CD4-positive, alpha-beta T cell (primary cell): ENCODE measurements at regions of chr15 and their contacts with region 1.

Region 1: GRCh38 chr15:51737280-51738017 is at the start of gene LYSMD2:
- DNase-seq: peak; percentile 28 to 84 (median 68)
- ATAC-seq: peak; percentile 56
- H3K4me3 ChIP-seq: peak within 1 kb of the TSS; percentile 78
- H3K4me3 Mint-ChIP-seq: peak within 1 kb of the TSS; percentile 92
- H3K27ac ChIP-seq: peak within 1 kb of the TSS; percentile 81 to 83
- H3K27ac Mint-ChIP-seq: peak within 1 kb of the TSS; percentile 97
- H3K4me1 ChIP-seq: peaks cover 57% of the 10 kb centered on the region
- H3K4me1 Mint-ChIP-seq: peaks cover 61% of the 10 kb centered on the region
- H3K27me3 ChIP-seq: no peaks in the 10 kb centered on the region
- H3K27me3 Mint-ChIP-seq: no peaks in the 10 kb centered on the region
- CTCF ChIP-seq: no peak
- total RNA-seq, gene LYSMD2: 17.4 TPM

Region 2: GRCh38 chr15:51348688-51349087 is 388.8 kb before region 1 on chr15:
- CTCF ChIA-PET with region 1: no interaction called
- POLR2A ChIA-PET with region 1: no interaction called
- intact Hi-C with region 1: no loop called
- DNase-seq: no peak
- ATAC-seq: no peak
- H3K4me3 ChIP-seq: no peak overlapping the region
- H3K4me3 Mint-ChIP-seq: no peak overlapping the region
- H3K27ac ChIP-seq: no peak overlapping the region
- H3K27ac Mint-ChIP-seq: no peak overlapping the region
- H3K4me1 ChIP-seq: no peaks in the 10 kb centered on the region
- H3K4me1 Mint-ChIP-seq: no peaks in the 10 kb centered on the region
- H3K27me3 ChIP-seq: peaks cover 0 to 18% of the 10 kb centered on the region in 2 experiments
- H3K27me3 Mint-ChIP-seq: peaks cover 19% of the 10 kb centered on the region
- CTCF ChIP-seq: no peak

Region 3: GRCh38 chr15:51649659-51650521 is 87.6 kb before region 1 on chr15:
- CTCF ChIA-PET with region 1: interaction called, 17 read pairs
- POLR2A ChIA-PET with region 1: interaction called, 6 read pairs
- intact Hi-C with region 1: loop called in 1 of 2 experiments (anchors 2 kb)
- DNase-seq: peak in 11 of 14 experiments; percentile 3 to 85 (median 37)
- ATAC-seq: peak; percentile 81
- H3K4me3 ChIP-seq: no peak overlapping the region
- H3K4me3 Mint-ChIP-seq: no peak overlapping the region
- H3K27ac ChIP-seq: no peak overlapping the region
- H3K27ac Mint-ChIP-seq: no peak overlapping the region
- H3K4me1 ChIP-seq: no peaks in the 10 kb centered on the region
- H3K4me1 Mint-ChIP-seq: no peaks in the 10 kb centered on the region
- H3K27me3 ChIP-seq: no peaks in the 10 kb centered on the region
- H3K27me3 Mint-ChIP-seq: no peaks in the 10 kb centered on the region
- CTCF ChIP-seq: peak; percentile 90

Region 4: DNA sequence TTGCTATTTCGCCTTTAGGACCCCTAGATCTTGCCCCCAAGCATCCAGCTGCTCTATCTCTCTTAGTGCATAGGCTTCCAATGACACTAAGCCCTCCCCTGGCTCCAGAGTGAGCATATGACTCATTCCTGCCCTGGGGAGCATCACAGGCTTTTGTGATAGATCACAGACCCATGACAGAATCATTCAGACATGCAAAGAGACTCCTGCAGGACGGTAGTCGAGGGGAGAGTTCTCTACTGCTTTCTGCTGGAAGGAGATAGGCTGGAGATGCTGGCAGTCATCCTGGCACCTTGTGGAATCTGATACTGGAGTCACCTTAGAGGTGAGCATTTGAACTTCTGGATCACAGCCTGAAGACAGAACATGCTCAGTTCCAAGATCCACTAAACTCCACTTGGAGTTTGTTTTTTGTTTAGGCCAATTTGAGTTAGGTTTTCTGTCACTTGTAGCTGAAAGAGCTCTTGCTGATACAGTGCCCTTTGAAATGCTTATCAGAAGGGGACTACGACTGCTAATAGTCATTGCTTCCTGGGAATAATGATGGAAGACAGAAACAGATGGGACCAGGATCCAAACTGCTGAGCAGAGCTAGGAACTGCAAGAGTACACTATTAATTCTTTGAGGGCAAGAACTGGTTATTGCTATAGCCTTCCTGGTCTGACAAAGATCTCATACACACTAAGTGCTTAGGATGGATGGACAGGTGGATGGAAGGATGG is 10.9 kb before region 1 on chr15:
- CTCF ChIA-PET with region 1: interaction called, 13 read pairs
- POLR2A ChIA-PET with region 1: interaction called, 14 read pairs
- intact Hi-C with region 1: no loop called
- DNase-seq: peak in 10 of 14 experiments; percentile 7 to 67 (median 25)
- ATAC-seq: peak; percentile 69
- H3K4me3 ChIP-seq: no peak overlapping the region
- H3K4me3 Mint-ChIP-seq: peak overlapping the region; percentile 52
- H3K27ac ChIP-seq: no peak overlapping the region
- H3K27ac Mint-ChIP-seq: peak overlapping the region; percentile 62
- H3K4me1 ChIP-seq: peaks cover 35% of the 10 kb centered on the region
- H3K4me1 Mint-ChIP-seq: peaks cover 65% of the 10 kb centered on the region
- H3K27me3 ChIP-seq: no peaks in the 10 kb centered on the region
- H3K27me3 Mint-ChIP-seq: no peaks in the 10 kb centered on the region
- CTCF ChIP-seq: no peak

Region 5: DNA sequence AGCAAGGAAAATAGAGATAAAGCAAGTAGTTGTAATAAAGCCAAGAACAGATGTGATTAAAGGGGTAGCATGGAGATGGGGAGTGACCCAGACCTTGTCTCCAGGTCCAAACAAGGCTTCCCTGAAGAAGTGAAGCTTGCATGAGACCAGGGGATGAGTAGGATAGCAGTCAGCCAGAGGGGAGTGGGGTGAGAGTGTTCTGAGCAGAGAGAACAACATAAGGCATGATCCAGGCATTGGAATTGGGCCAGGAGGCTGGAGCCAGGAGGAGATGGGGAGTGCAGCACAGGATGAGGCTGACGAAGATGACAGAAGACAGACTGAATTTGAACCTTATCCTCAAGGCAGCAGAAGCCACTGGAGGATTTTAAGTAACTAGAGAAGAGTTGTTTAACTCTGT is 21.2 kb after region 1 on chr15:
- CTCF ChIA-PET with region 1: interaction called, 7 read pairs
- POLR2A ChIA-PET with region 1: interaction called, 45 read pairs
- intact Hi-C with region 1: loop called in 1 of 2 experiments (anchors 2 kb)
- DNase-seq: no peak
- ATAC-seq: no peak
- H3K4me3 ChIP-seq: no peak overlapping the region
- H3K4me3 Mint-ChIP-seq: no peak overlapping the region
- H3K27ac ChIP-seq: no peak overlapping the region
- H3K27ac Mint-ChIP-seq: no peak overlapping the region
- H3K4me1 ChIP-seq: no peaks in the 10 kb centered on the region
- H3K4me1 Mint-ChIP-seq: peaks cover 22% of the 10 kb centered on the region
- H3K27me3 ChIP-seq: no peaks in the 10 kb centered on the region
- H3K27me3 Mint-ChIP-seq: no peaks in the 10 kb centered on the region
- CTCF ChIP-seq: no peak

Region 6: DNA sequence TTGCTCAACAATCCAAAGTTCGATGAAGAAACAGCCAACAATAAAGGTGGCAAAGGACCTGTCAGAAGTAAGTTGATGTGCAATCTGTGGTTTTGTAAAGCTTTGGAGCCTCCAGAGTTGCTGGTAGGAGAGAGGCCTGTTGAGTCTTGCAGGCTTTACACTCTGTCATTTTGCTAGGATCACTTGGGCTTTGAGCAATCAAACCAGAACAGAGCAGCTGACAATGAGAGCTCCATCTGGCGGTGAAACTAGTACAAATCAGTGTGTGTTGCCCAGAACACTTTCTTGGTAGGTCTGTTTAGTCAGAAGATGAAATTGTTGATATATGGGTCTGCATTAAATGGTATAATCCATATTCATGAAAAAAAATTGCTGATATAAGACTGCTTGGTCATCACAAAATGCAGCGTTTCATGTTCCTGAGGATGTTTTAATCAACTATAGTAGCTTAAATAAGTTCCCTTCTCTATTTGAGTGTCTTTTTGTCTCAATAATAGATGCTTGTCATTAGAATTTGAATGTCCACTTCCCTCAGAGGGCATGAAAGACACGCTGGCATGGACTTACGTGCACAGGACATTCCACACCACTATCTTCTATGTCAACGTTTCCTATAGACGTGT is 39.6 kb after region 1 on chr15:
- CTCF ChIA-PET with region 1: interaction called, 34 read pairs
- POLR2A ChIA-PET with region 1: interaction called, 15 read pairs
- intact Hi-C with region 1: loop called in 1 of 2 experiments (anchors 2 kb)
- DNase-seq: peak; percentile 32 to 83 (median 50)
- ATAC-seq: peak; percentile 85
- H3K4me3 ChIP-seq: no peak overlapping the region
- H3K4me3 Mint-ChIP-seq: no peak overlapping the region
- H3K27ac ChIP-seq: no peak overlapping the region
- H3K27ac Mint-ChIP-seq: no peak overlapping the region
- H3K4me1 ChIP-seq: no peaks in the 10 kb centered on the region
- H3K4me1 Mint-ChIP-seq: peaks cover 9% of the 10 kb centered on the region
- H3K27me3 ChIP-seq: no peaks in the 10 kb centered on the region
- H3K27me3 Mint-ChIP-seq: no peaks in the 10 kb centered on the region
- CTCF ChIP-seq: peak; percentile 70